CD8-positive, alpha-beta T cell (primary cell): ENCODE measurements at regions of chr12 and their contacts with region 1.

Region 1: DNA sequence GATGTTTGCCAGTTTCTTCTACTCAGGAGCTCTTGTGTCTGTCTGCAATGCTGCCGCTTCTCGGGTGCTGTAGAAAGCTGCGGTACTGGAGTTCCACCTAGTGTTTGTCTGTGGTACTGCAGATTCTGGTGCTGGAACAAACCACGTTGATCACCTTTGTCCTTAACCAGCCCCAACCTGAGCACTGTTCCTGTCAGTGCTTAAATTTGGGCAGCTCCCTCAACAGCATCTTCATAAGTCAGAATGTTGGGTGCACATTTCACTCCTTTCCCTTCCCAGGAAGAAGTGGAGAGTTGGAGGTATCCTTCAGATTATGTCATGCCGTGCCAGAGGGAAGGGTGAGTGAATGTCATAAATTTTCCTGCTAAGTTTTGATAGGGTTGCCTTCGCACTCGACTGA is 48.7 kb upstream of the LALBA start:
- DNase-seq: peak; percentile 56 to 84 (median 73)
- ATAC-seq: peak; percentile 100
- H3K4me3 ChIP-seq: no peak overlapping the region
- H3K4me3 Mint-ChIP-seq: no peak overlapping the region
- H3K27ac ChIP-seq: no peak overlapping the region
- H3K27ac Mint-ChIP-seq: no peak overlapping the region
- H3K4me1 ChIP-seq: no peaks in the 10 kb centered on the region
- H3K4me1 Mint-ChIP-seq: no peaks in the 10 kb centered on the region
- H3K27me3 ChIP-seq: no peaks in the 10 kb centered on the region
- H3K27me3 Mint-ChIP-seq: peaks cover 33% of the 10 kb centered on the region
- CTCF ChIP-seq: peak; percentile 94

Region 2: DNA sequence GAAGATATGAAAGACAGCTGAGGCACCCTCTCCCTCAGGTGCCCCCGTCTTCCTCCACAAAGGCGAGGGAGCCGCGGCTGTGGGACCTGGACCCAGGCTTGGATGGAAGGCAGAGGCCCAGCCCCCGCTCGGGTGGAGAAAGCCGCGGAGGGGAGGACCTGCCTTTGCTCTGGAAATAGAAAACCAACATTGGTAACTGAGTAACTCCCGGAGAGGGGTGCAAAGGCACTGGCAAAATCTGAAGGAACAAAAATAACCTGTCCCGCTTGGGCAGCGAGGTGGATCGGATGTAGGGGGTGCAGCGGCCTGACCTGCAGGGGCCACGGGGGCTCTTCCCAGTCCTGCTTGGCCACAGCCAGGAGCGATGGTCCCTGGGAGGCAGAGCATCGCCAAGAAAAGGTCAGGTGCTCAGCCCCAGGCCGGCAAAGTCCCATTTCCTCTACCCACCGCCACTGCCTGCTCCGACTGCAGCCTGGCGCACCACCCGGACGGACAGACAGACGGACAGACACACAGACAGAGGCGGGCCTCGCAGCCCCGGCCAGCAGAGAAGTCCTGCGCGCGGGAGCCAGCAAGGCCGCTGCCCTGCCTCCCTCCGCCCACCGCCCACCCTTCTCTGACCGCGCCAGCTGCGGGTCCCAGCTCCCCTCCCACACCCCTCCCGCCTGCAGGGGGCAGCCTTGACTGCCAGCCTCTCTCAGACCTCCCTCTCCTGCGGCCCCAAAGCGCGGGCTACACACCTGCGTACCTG is 676.5 kb before region 1 on chr12:
- CTCF ChIA-PET with region 1: no interaction called
- POLR2A ChIA-PET with region 1: no interaction called
- intact Hi-C with region 1: loop called in 1 of 2 experiments (anchors 1 kb)
- DNase-seq: peak in 8 of 9 experiments; percentile 25 to 68 (median 59)
- ATAC-seq: peak; percentile 74
- H3K4me3 ChIP-seq: no peak overlapping the region
- H3K4me3 Mint-ChIP-seq: no peak overlapping the region
- H3K27ac ChIP-seq: no peak overlapping the region
- H3K27ac Mint-ChIP-seq: no peak overlapping the region
- H3K4me1 ChIP-seq: no peaks in the 10 kb centered on the region
- H3K4me1 Mint-ChIP-seq: peaks cover 7% of the 10 kb centered on the region
- H3K27me3 ChIP-seq: peaks cover 0 to 10% of the 10 kb centered on the region in 2 experiments
- H3K27me3 Mint-ChIP-seq: peaks cover 30% of the 10 kb centered on the region
- CTCF ChIP-seq: peak; percentile 53

Region 3: GRCh38 chr12:47963340-47964040 is 655.1 kb before region 1 on chr12 and contains the start of gene TMEM106C:
- CTCF ChIA-PET with region 1: no interaction called
- POLR2A ChIA-PET with region 1: no interaction called
- intact Hi-C with region 1: loop called in 1 of 2 experiments (anchors 5 kb)
- DNase-seq: peak; percentile 82 to 96 (median 90)
- ATAC-seq: peak; percentile 98
- H3K4me3 ChIP-seq: peak within 1 kb of the TSS; percentile 67 to 76
- H3K4me3 Mint-ChIP-seq: peak within 1 kb of the TSS; percentile 97
- H3K27ac ChIP-seq: peak within 1 kb of the TSS in 1 of 2 experiments; percentile 43
- H3K27ac Mint-ChIP-seq: peak within 1 kb of the TSS; percentile 83
- H3K4me1 ChIP-seq: peaks cover 13% of the 10 kb centered on the region
- H3K4me1 Mint-ChIP-seq: peaks cover 25% of the 10 kb centered on the region
- H3K27me3 ChIP-seq: no peaks in the 10 kb centered on the region
- H3K27me3 Mint-ChIP-seq: peaks cover 11% of the 10 kb centered on the region
- CTCF ChIP-seq: peak; percentile 93
- total RNA-seq, gene TMEM106C: 12.1 to 13.1 TPM

Region 4: GRCh38 chr12:48084066-48084465 is 534.5 kb before region 1 on chr12:
- CTCF ChIA-PET with region 1: interaction called, 3 read pairs
- POLR2A ChIA-PET with region 1: no interaction called
- intact Hi-C with region 1: loop called (anchors 5 to 10 kb)
- DNase-seq: peak in 2 of 9 experiments; percentile 13 to 33
- ATAC-seq: no peak
- H3K4me3 ChIP-seq: no peak overlapping the region
- H3K4me3 Mint-ChIP-seq: no peak overlapping the region
- H3K27ac ChIP-seq: no peak overlapping the region
- H3K27ac Mint-ChIP-seq: no peak overlapping the region
- H3K4me1 ChIP-seq: no peaks in the 10 kb centered on the region
- H3K4me1 Mint-ChIP-seq: no peaks in the 10 kb centered on the region
- H3K27me3 ChIP-seq: no peaks in the 10 kb centered on the region
- H3K27me3 Mint-ChIP-seq: no peaks in the 10 kb centered on the region
- CTCF ChIP-seq: no peak

Region 5: DNA sequence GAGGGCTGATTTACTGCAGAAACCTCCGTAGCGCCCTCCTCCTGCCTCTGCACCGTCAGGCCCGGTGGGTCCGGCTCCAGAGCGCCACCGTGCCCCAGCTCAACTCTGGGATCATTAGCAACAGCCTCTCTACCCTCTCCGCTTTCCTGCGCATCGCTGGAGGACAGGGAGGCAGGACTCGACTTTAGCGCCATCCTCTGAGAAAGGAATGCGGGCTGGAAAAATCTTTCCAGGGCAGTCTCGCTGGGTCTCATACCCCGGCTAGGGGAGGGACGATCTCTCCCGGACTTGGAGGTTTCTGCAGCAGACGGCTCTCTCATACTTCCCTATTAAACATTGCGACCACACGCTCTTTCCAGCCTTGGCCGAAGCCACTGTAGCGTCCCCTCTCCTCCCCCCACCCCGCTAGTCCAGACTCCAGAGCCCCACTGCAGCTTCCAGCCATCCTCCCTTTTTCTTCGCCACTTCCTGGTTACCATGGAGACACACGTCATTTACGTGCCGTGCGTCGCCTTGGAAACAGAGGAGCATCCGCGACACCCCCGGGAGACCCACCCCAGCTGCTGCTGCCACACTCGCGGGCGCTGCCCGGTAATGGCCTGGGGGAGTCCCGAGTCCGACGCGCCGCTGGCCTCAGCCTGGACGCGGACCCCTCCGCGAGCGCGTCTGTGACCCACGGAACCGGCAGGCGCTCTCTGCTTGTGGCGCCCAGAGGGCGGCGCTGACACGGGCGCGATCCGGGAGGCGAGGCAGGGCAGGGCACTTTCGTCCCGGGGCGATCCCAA is 435.3 kb before region 1 on chr12 and contains the start of gene CCDC184:
- CTCF ChIA-PET with region 1: interaction called, 4 read pairs
- POLR2A ChIA-PET with region 1: no interaction called
- intact Hi-C with region 1: loop called (anchors 2 to 5 kb)
- DNase-seq: peak; percentile 48 to 93 (median 74)
- ATAC-seq: peak; percentile 80
- H3K4me3 ChIP-seq: peak within 1 kb of the TSS; percentile 75 to 99
- H3K4me3 Mint-ChIP-seq: peak within 1 kb of the TSS; percentile 93
- H3K27ac ChIP-seq: peak within 1 kb of the TSS; percentile 50 to 85
- H3K27ac Mint-ChIP-seq: peak within 1 kb of the TSS; percentile 43
- H3K4me1 ChIP-seq: peaks cover 14% of the 10 kb centered on the region
- H3K4me1 Mint-ChIP-seq: peaks cover 6% of the 10 kb centered on the region
- H3K27me3 ChIP-seq: peaks cover 6 to 12% of the 10 kb centered on the region in 2 experiments
- H3K27me3 Mint-ChIP-seq: peaks cover 29% of the 10 kb centered on the region
- CTCF ChIP-seq: peak; percentile 54
- total RNA-seq, gene CCDC184: 0.90 to 1.3 TPM

Region 6: GRCh38 chr12:48542300-48542928 is 76.1 kb before region 1 on chr12:
- CTCF ChIA-PET with region 1: interaction called, 91 read pairs
- POLR2A ChIA-PET with region 1: no interaction called
- intact Hi-C with region 1: loop called (anchors 1 kb)
- DNase-seq: peak in 8 of 9 experiments; percentile 7 to 57 (median 40)
- ATAC-seq: no peak
- H3K4me3 ChIP-seq: no peak overlapping the region
- H3K4me3 Mint-ChIP-seq: no peak overlapping the region
- H3K27ac ChIP-seq: no peak overlapping the region
- H3K27ac Mint-ChIP-seq: no peak overlapping the region
- H3K4me1 ChIP-seq: no peaks in the 10 kb centered on the region
- H3K4me1 Mint-ChIP-seq: peaks cover 3% of the 10 kb centered on the region
- H3K27me3 ChIP-seq: no peaks in the 10 kb centered on the region
- H3K27me3 Mint-ChIP-seq: no peaks in the 10 kb centered on the region
- CTCF ChIP-seq: peak; percentile 47

Region 7: GRCh38 chr12:48631057-48631456 is 12.5 kb after region 1 on chr12:
- CTCF ChIA-PET with region 1: interaction called, 20 read pairs
- POLR2A ChIA-PET with region 1: interaction called, 4 read pairs
- intact Hi-C with region 1: no loop called
- DNase-seq: no peak
- ATAC-seq: no peak
- H3K4me3 ChIP-seq: no peak overlapping the region
- H3K4me3 Mint-ChIP-seq: no peak overlapping the region
- H3K27ac ChIP-seq: no peak overlapping the region
- H3K27ac Mint-ChIP-seq: no peak overlapping the region
- H3K4me1 ChIP-seq: no peaks in the 10 kb centered on the region
- H3K4me1 Mint-ChIP-seq: no peaks in the 10 kb centered on the region
- H3K27me3 ChIP-seq: no peaks in the 10 kb centered on the region
- H3K27me3 Mint-ChIP-seq: peaks cover 21% of the 10 kb centered on the region
- CTCF ChIP-seq: no peak

Region 8: GRCh38 chr12:50187084-50187900 is 1568.8 kb after region 1 on chr12:
- CTCF ChIA-PET with region 1: no interaction called
- POLR2A ChIA-PET with region 1: no interaction called
- intact Hi-C with region 1: no loop called
- DNase-seq: no peak
- ATAC-seq: no peak
- H3K4me3 ChIP-seq: no peak overlapping the region
- H3K4me3 Mint-ChIP-seq: no peak overlapping the region
- H3K27ac ChIP-seq: no peak overlapping the region
- H3K27ac Mint-ChIP-seq: no peak overlapping the region
- H3K4me1 ChIP-seq: no peaks in the 10 kb centered on the region
- H3K4me1 Mint-ChIP-seq: peaks cover 9% of the 10 kb centered on the region
- H3K27me3 ChIP-seq: no peaks in the 10 kb centered on the region
- H3K27me3 Mint-ChIP-seq: no peaks in the 10 kb centered on the region
- CTCF ChIP-seq: no peak